Caco-2 (cell line): ENCODE measurements at regions of chr11 and their contacts with region 1.

Region 1: DNA sequence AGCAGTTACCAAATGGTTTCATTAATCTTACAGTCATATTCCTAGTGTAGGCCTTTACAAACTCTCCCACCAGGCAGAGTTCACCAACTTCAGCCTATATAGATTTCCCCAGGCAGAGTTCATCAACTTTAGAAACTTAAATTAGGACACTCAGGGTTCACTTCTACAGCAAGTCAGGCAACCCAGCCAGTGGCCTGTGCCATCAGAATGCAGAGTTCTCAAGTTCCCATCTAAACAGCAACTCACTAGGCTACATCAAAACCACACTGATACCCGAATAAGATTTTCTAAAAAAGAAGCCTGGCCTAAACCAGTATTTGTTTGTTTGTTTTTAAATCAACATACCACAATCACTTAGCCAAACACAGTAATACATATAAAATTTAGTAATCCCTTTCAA is 33.7 kb downstream of the PICALM start:
- DNase-seq: no peak
- H3K4me3 ChIP-seq: no peak overlapping the region
- H3K4me3 Mint-ChIP-seq: no peak overlapping the region
- H3K27ac Mint-ChIP-seq: peak overlapping the region; percentile 29
- H3K4me1 ChIP-seq: peaks cover 31% of the 10 kb centered on the region
- H3K4me1 Mint-ChIP-seq: peaks cover 54% of the 10 kb centered on the region
- H3K27me3 ChIP-seq: no peaks in the 10 kb centered on the region
- H3K27me3 Mint-ChIP-seq: no peaks in the 10 kb centered on the region
- CTCF ChIP-seq: no peak

Region 2: DNA sequence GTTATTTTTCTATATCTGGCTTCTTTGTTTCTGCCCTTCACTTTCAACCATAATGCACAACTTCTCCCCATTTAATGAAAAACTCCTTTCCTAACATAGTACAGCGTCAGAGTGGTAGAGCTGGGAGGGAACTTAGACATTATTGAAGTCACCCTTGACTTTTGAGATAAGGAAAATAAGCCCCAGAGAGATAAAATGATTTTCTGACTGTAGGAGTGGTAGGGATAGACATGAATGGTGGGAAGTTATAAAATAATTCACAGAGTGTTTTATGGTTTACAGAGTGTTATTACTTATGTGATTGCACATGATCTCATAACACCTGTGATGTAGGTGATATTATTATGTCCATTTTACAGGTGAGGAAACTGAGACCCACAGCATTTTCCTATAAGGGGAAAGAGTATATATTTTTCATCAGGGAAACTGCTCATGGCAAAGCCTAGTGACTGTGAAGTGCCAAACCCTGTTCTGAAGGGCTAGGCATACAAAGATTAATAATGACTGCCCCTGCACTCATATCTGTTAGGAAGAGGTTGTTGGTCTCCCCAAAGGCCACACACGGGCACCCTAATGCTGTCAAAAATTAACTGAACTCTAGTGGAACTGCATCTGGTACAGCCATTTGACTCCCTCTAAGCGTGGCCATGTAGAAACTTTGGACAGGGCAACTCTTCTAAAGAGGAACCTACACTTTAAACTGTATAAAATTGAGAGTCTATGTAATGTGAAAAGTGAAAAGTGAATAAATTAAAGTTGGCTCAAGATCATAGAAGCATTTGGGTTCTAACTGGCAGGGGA is 94.8 kb after region 1 on chr11:
- CTCF ChIA-PET with region 1: interaction called, 13 read pairs
- POLR2A ChIA-PET with region 1: interaction called, 14 read pairs
- intact Hi-C with region 1: no loop called
- DNase-seq: no peak
- H3K4me3 ChIP-seq: no peak overlapping the region
- H3K4me3 Mint-ChIP-seq: no peak overlapping the region
- H3K27ac Mint-ChIP-seq: no peak overlapping the region
- H3K4me1 ChIP-seq: peaks cover 78% of the 10 kb centered on the region
- H3K4me1 Mint-ChIP-seq: peaks cover 43% of the 10 kb centered on the region
- H3K27me3 ChIP-seq: no peaks in the 10 kb centered on the region
- H3K27me3 Mint-ChIP-seq: no peaks in the 10 kb centered on the region
- CTCF ChIP-seq: no peak

Region 3: GRCh38 chr11:86218125-86219084 is 183.2 kb after region 1 on chr11:
- CTCF ChIA-PET with region 1: interaction called, 5 read pairs
- POLR2A ChIA-PET with region 1: no interaction called
- intact Hi-C with region 1: loop called (anchors 2 kb)
- DNase-seq: peak; percentile 74 to 88
- H3K4me3 ChIP-seq: no peak overlapping the region
- H3K4me3 Mint-ChIP-seq: peak overlapping the region; percentile 15
- H3K27ac Mint-ChIP-seq: peak overlapping the region; percentile 25
- H3K4me1 ChIP-seq: peaks cover 12% of the 10 kb centered on the region
- H3K4me1 Mint-ChIP-seq: peaks cover 22% of the 10 kb centered on the region
- H3K27me3 ChIP-seq: no peaks in the 10 kb centered on the region
- H3K27me3 Mint-ChIP-seq: no peaks in the 10 kb centered on the region
- CTCF ChIP-seq: peak; percentile 98